ENCODE measurements at regions of chr1 and their contacts with region 1.

Region 1: GRCh38 chr1:61318319-61319125 is 236.2 kb downstream of the NFIA start:
- DNase-seq: peak; percentile 67
- H3K4me3 Mint-ChIP-seq: peak overlapping the region; percentile 56
- H3K27ac Mint-ChIP-seq: peak overlapping the region; percentile 74
- H3K4me1 Mint-ChIP-seq: peaks cover 27% of the 10 kb centered on the region
- H3K27me3 Mint-ChIP-seq: peaks cover 9% of the 10 kb centered on the region

Region 2: GRCh38 chr1:60898987-60899386 is 419.5 kb before region 1 on chr1:
- intact Hi-C with region 1: loop called (anchors 2 kb)
- DNase-seq: no peak
- H3K4me3 Mint-ChIP-seq: no peak overlapping the region
- H3K27ac Mint-ChIP-seq: no peak overlapping the region
- H3K4me1 Mint-ChIP-seq: peaks cover 3% of the 10 kb centered on the region
- H3K27me3 Mint-ChIP-seq: peaks cover 9% of the 10 kb centered on the region

Region 3: GRCh38 chr1:61077676-61078541 is 240.6 kb before region 1 on chr1:
- intact Hi-C with region 1: loop called (anchors 2 kb)
- DNase-seq: peak; percentile 96
- H3K4me3 Mint-ChIP-seq: peak overlapping the region; percentile 92
- H3K27ac Mint-ChIP-seq: peak overlapping the region; percentile 86
- H3K4me1 Mint-ChIP-seq: peaks cover 39% of the 10 kb centered on the region
- H3K27me3 Mint-ChIP-seq: peaks cover 50% of the 10 kb centered on the region

Region 4: DNA sequence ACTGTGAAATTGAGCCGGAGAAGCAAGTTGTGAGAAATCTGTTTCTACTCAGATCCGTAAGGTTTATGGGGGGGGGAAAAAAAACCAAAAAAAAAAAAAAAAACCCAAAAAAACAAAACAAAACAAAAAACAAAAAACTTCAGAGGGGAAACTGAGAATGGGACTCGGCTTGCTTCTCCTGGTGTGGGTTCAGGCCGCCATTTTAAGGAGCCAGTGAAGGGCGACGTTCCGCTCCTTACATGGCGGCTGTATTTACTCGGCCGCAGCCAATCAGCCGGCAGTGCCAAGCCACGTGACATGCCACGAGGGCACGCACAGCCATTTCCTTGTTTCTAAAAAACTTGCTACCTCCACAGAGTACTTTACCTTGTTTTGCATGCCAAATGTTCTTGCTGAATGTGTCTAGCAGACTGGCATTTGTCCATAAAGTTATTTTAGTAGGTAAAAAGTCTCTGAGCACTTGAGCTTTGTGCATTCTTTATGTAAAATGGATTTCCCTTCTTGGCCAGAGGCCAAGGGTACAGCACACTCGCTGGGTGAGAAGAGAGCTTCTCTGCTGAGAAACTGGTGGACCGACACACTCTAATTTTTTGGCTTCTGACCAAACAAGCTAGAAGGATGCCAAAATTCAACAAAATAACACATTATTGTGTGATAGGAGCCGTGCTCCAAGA is 134.3 kb before region 1 on chr1:
- intact Hi-C with region 1: no loop called
- DNase-seq: no peak
- H3K4me3 Mint-ChIP-seq: no peak overlapping the region
- H3K27ac Mint-ChIP-seq: no peak overlapping the region
- H3K4me1 Mint-ChIP-seq: no peaks in the 10 kb centered on the region
- H3K27me3 Mint-ChIP-seq: peaks cover 9% of the 10 kb centered on the region

Region 5: GRCh38 chr1:61244114-61244513 is 74.4 kb before region 1 on chr1:
- intact Hi-C with region 1: no loop called
- DNase-seq: no peak
- H3K4me3 Mint-ChIP-seq: no peak overlapping the region
- H3K27ac Mint-ChIP-seq: no peak overlapping the region
- H3K4me1 Mint-ChIP-seq: no peaks in the 10 kb centered on the region
- H3K27me3 Mint-ChIP-seq: peaks cover 2% of the 10 kb centered on the region

Region 6: GRCh38 chr1:61270761-61271411 is 47.6 kb before region 1 on chr1:
- intact Hi-C with region 1: loop called (anchors 1 kb)
- DNase-seq: no peak
- H3K4me3 Mint-ChIP-seq: no peak overlapping the region
- H3K27ac Mint-ChIP-seq: peak overlapping the region; percentile 57
- H3K4me1 Mint-ChIP-seq: no peaks in the 10 kb centered on the region
- H3K27me3 Mint-ChIP-seq: peaks cover 8% of the 10 kb centered on the region

Region 7: DNA sequence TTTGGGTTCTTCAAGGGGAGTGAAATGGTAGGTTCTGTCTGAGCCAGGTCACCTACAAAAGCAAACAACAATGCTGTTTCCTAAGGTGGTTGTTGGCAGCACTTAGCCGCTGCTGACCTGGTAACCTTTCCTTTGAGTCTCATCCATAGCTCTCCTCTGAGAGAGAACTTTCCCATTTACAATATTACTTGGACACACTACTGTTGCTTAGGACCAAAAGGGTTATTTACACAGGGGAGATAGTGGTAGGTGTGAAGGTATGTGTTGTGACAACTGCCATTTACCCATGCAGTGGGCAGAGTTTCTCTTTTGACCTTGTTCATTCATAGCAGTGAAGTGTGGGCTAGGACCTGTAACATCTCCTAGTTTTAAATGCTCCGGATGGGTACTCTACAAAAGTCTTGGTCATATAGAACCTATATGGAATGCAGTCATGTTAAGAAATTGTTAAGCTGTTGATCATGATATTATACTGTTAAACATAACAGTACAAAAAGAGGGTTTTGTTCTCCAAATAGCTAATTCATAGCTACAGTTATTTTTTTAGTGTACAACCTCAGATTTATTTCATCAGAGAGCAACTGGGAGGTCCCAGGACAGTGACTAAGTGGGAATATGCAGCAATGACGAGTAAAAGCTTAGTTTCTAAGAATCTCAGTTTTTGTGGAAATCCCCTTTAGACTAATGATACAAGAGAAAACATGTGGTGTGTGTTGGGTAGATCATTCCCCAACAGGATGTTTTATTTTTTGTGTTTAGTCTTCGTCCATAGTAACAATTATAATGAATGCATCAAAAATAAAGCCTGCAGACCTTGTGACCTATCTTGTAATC is 16.5 kb before region 1 on chr1:
- intact Hi-C with region 1: loop called (anchors 1 kb)
- DNase-seq: peak; percentile 67
- H3K4me3 Mint-ChIP-seq: peak overlapping the region; percentile 36
- H3K27ac Mint-ChIP-seq: peak overlapping the region; percentile 87
- H3K4me1 Mint-ChIP-seq: peaks cover 26% of the 10 kb centered on the region
- H3K27me3 Mint-ChIP-seq: peaks cover 4% of the 10 kb centered on the region

Region 8: GRCh38 chr1:61332196-61332753 is 13.8 kb after region 1 on chr1:
- intact Hi-C with region 1: loop called (anchors 1 kb)
- DNase-seq: peak; percentile 66
- H3K4me3 Mint-ChIP-seq: peak overlapping the region; percentile 3
- H3K27ac Mint-ChIP-seq: peak overlapping the region; percentile 83
- H3K4me1 Mint-ChIP-seq: peaks cover 15% of the 10 kb centered on the region
- H3K27me3 Mint-ChIP-seq: peaks cover 20% of the 10 kb centered on the region

Region 9: DNA sequence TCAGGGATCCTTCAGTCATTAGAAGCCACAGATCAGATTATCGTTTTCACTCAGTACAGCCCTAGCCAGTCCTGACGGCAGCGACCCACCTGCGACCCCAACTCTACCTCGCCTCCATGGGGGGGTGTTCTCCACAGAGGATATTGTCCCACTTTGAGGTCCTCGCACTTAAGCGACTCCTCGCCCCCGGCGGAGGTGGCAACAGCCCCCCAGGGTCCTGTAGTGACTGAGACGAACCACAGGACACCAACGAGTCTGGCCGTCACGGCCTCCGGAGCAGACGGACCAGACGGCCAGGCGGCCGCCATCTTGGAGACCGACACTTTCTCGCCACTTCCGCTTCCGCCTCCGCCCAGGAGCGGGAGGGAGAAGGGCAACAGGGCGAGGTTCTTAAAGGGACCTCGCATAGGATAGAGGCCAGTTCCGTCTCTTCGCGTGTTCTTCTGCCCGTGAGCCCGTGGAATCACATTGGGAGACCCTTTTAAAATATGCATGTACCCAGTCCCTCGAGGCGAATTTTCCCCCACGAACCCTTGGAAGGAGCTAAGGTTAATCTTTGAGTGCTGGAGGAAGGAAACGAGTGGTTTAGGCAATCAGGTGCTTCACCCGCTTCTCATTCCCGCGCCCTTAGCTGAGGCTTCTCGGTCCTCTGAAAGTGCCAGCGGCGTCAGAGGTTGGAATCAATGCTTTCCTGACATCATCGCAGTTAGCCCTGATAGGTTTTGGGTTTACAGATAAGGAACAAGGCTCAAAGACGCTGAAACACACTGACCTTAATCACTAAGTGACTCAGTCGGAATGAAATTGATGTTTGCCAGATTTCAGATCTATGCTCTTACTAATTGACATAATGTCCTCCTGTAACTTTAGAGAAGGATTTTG is 406.5 kb after region 1 on chr1 and contains the start of gene TM2D1:
- intact Hi-C with region 1: loop called (anchors 1 kb)
- DNase-seq: peak; percentile 97
- H3K4me3 Mint-ChIP-seq: peak within 1 kb of the TSS; percentile 95
- H3K27ac Mint-ChIP-seq: peak within 1 kb of the TSS; percentile 98
- H3K4me1 Mint-ChIP-seq: peaks cover 11% of the 10 kb centered on the region
- H3K27me3 Mint-ChIP-seq: no peaks in the 10 kb centered on the region
- total RNA-seq, gene TM2D1: 29.8 and 32.9 TPM in 2 replicates

Measured in activated CD4-positive, alpha-beta T cell treated with anti-CD3 and anti-CD28 coated beads, Interleukin-2, amount 10 ng/mL, durations not matched to agents 24 days and 14 days (primary cell).